ENCODE measurements at regions of chr5 and their contacts with region 1.

Region 1: GRCh38 chr5:148374692-148375360 is 8.9 kb upstream of the FBXO38 start:
- DNase-seq: peak; percentile 86
- H3K4me3 Mint-ChIP-seq: no peak overlapping the region
- H3K27ac Mint-ChIP-seq: no peak overlapping the region
- H3K4me1 Mint-ChIP-seq: peaks cover 7% of the 10 kb centered on the region
- H3K27me3 Mint-ChIP-seq: no peaks in the 10 kb centered on the region
- CTCF ChIP-seq: peak; percentile 94

Region 2: GRCh38 chr5:147857302-147858129 is 517.3 kb before region 1 on chr5:
- CTCF ChIA-PET with region 1: no interaction called
- POLR2A ChIA-PET with region 1: no interaction called
- intact Hi-C with region 1: loop called (anchors 5 kb)
- DNase-seq: peak; percentile 80
- H3K4me3 Mint-ChIP-seq: no peak overlapping the region
- H3K27ac Mint-ChIP-seq: no peak overlapping the region
- H3K4me1 Mint-ChIP-seq: no peaks in the 10 kb centered on the region
- H3K27me3 Mint-ChIP-seq: no peaks in the 10 kb centered on the region
- CTCF ChIP-seq: peak; percentile 76

Region 3: DNA sequence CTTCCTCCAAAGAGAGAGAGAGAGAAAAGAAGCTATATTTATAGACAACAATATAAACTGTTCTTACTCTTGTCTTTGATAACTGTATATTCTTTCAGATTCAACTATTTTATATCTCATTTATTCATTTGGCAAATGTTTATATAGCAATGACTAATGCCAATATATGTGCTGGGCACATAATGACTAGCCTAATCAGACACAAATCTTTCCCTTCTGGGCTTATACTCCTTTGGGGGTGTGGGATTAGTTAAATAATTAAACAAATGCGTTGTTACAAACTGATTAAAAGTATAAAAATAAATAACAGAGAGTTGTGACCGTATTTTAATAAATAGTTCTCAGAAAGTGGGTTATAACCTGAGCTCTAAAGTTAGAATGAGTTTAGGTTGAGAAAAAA is 202.4 kb before region 1 on chr5:
- CTCF ChIA-PET with region 1: interaction called, 19 read pairs
- POLR2A ChIA-PET with region 1: no interaction called
- intact Hi-C with region 1: no loop called
- DNase-seq: no peak
- H3K4me3 Mint-ChIP-seq: no peak overlapping the region
- H3K27ac Mint-ChIP-seq: no peak overlapping the region
- H3K4me1 Mint-ChIP-seq: no peaks in the 10 kb centered on the region
- H3K27me3 Mint-ChIP-seq: peaks cover 6% of the 10 kb centered on the region
- CTCF ChIP-seq: no peak

Region 4: GRCh38 chr5:148205044-148205806 is 169.6 kb before region 1 on chr5:
- CTCF ChIA-PET with region 1: interaction called, 10 read pairs
- POLR2A ChIA-PET with region 1: interaction called, 3 read pairs
- intact Hi-C with region 1: no loop called
- DNase-seq: peak; percentile 22
- H3K4me3 Mint-ChIP-seq: no peak overlapping the region
- H3K27ac Mint-ChIP-seq: no peak overlapping the region
- H3K4me1 Mint-ChIP-seq: peaks cover 17% of the 10 kb centered on the region
- H3K27me3 Mint-ChIP-seq: no peaks in the 10 kb centered on the region
- CTCF ChIP-seq: no peak

Region 5: DNA sequence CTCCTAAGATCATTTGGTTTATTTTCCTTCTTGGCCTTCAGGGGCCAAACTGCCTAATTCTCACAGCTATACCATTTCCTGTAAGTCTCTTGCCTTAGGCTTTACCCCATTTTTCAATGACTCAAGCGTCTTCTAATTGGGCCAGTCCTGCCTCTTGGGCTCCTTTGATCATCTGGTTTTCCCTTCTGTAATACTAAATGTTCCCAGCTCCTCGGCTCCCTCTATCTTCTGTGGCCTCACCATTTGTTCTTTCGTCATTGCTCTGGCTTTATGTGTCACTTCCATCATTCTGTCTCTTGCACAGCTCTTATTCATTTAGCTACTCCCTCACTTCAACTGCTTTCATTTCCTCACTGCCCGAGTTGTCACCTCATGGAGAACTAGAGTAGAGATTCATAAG is 77.1 kb before region 1 on chr5:
- CTCF ChIA-PET with region 1: interaction called, 136 read pairs
- POLR2A ChIA-PET with region 1: no interaction called
- intact Hi-C with region 1: no loop called
- DNase-seq: peak; percentile 14
- H3K4me3 Mint-ChIP-seq: no peak overlapping the region
- H3K27ac Mint-ChIP-seq: no peak overlapping the region
- H3K4me1 Mint-ChIP-seq: no peaks in the 10 kb centered on the region
- H3K27me3 Mint-ChIP-seq: no peaks in the 10 kb centered on the region
- CTCF ChIP-seq: no peak

Region 6: DNA sequence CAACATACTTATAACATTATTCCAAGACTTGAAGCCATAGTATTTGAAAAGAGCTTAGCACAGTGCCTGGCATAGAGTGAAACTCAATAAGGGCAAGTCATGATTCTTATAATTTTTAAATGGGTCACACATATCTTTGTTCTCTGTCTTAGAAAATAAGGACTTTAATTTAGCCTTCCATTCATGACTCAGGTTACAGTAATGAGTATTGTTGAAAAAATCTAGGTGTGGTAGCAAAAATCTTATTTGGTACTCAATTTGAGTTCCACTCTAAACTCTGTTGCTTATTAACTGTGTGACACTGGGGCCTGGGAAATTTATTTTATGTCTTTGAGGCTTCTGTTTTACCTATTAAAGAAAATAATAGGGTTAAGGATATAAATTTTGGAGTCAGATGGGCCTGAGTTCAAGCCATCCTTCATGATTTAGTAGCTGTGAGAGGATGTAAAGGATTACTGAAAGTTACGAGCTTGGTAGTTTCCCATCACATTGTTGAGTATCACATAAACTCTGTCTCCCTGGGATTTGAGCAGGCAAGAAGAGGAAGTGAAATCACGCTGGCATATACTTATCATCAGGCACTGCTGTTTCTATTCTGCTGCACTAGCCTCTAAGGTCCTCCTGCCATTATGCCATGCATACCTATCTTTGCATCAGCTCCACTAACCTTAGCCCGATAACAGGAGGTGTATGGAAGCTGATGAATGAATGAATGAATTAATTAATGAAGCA is 38.0 kb before region 1 on chr5:
- CTCF ChIA-PET with region 1: interaction called, 13 read pairs
- POLR2A ChIA-PET with region 1: no interaction called
- intact Hi-C with region 1: no loop called
- DNase-seq: no peak
- H3K4me3 Mint-ChIP-seq: no peak overlapping the region
- H3K27ac Mint-ChIP-seq: peak overlapping the region; percentile 74
- H3K4me1 Mint-ChIP-seq: peaks cover 8% of the 10 kb centered on the region
- H3K27me3 Mint-ChIP-seq: no peaks in the 10 kb centered on the region
- CTCF ChIP-seq: no peak

Region 7: GRCh38 chr5:148364343-148364742 is 10.5 kb before region 1 on chr5:
- CTCF ChIA-PET with region 1: interaction called, 53 read pairs
- POLR2A ChIA-PET with region 1: no interaction called
- intact Hi-C with region 1: no loop called
- DNase-seq: no peak
- H3K4me3 Mint-ChIP-seq: no peak overlapping the region
- H3K27ac Mint-ChIP-seq: no peak overlapping the region
- H3K4me1 Mint-ChIP-seq: no peaks in the 10 kb centered on the region
- H3K27me3 Mint-ChIP-seq: no peaks in the 10 kb centered on the region
- CTCF ChIP-seq: no peak

Measured in MCF 10A (cell line).